CD4-positive, alpha-beta memory T cell (primary cell): ENCODE measurements at regions of chr6 and their contacts with region 1.

Region 1: GRCh38 chr6:111113336-111114086 is 26.2 kb downstream of the SLC16A10 start:
- DNase-seq: peak in 2 of 5 donors; percentile 4 to 50
- H3K4me3 ChIP-seq: no peak overlapping the region
- H3K4me3 Mint-ChIP-seq: peak overlapping the region; percentile 26 to 82 (median 70)
- H3K27ac ChIP-seq: no peak overlapping the region
- H3K27ac Mint-ChIP-seq: peak overlapping the region; percentile 38 to 94 (median 93)
- H3K4me1 ChIP-seq: peaks cover 28% of the 10 kb centered on the region
- H3K4me1 Mint-ChIP-seq: peaks cover 14 to 29% (median 21%) of the 10 kb centered on the region in 4 donors
- H3K27me3 ChIP-seq: no peaks in the 10 kb centered on the region
- H3K27me3 Mint-ChIP-seq: peaks cover 0 to 1% of the 10 kb centered on the region in 2 donors

Region 2: DNA sequence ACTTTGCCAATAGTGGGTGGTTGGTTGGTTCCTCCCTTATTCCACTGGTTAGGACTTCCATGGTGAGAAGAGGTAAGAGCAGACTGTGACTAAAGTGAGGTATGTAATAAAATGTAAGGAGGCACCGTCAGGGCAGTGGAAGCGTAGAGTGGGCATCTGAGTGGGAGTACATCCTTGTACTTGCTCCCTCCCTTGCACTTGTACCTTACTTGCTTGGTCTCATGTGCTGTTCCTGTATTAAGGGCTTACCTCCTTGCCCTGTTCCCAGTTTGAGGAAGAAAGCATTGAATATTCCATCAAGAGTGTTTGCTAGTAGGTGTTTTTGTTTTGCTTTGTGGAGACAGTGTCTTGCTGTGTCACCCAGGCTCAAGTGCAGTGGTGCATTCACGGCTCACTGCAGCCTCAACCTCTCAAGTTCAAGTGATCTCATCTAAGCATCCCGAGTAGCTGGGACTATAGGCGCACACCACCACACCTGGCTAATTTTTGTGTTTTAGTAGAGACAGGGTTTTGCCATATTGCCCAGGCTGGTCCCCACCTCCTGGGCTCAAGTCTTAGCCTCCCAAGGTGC is 213.4 kb before region 1 on chr6:
- CTCF ChIA-PET with region 1: no interaction called
- POLR2A ChIA-PET with region 1: no interaction called
- intact Hi-C with region 1: no loop called
- DNase-seq: no peak
- H3K4me3 ChIP-seq: no peak overlapping the region
- H3K4me3 Mint-ChIP-seq: no peak overlapping the region
- H3K27ac ChIP-seq: no peak overlapping the region
- H3K27ac Mint-ChIP-seq: peak overlapping the region in 3 of 7 donors; percentile 13 to 74 (median 38)
- H3K4me1 ChIP-seq: no peaks in the 10 kb centered on the region
- H3K4me1 Mint-ChIP-seq: peaks cover 0 to 4% (median 4%) of the 10 kb centered on the region in 4 donors
- H3K27me3 ChIP-seq: no peaks in the 10 kb centered on the region
- H3K27me3 Mint-ChIP-seq: no peaks in the 10 kb centered on the region

Region 3: GRCh38 chr6:111087106-111087835 is 26.2 kb before region 1 on chr6 and contains the start of gene SLC16A10:
- CTCF ChIA-PET with region 1: no interaction called
- POLR2A ChIA-PET with region 1: interaction called, 4 read pairs
- intact Hi-C with region 1: loop called (anchors 1 kb)
- DNase-seq: peak; percentile 75 to 82 (median 79)
- H3K4me3 ChIP-seq: peak within 1 kb of the TSS; percentile 62 to 74
- H3K4me3 Mint-ChIP-seq: peak within 1 kb of the TSS; percentile 88 to 99 (median 93)
- H3K27ac ChIP-seq: peak within 1 kb of the TSS; percentile 47
- H3K27ac Mint-ChIP-seq: peak within 1 kb of the TSS; percentile 77 to 92 (median 90)
- H3K4me1 ChIP-seq: peaks cover 22% of the 10 kb centered on the region
- H3K4me1 Mint-ChIP-seq: peaks cover 21 to 37% (median 26%) of the 10 kb centered on the region in 4 donors
- H3K27me3 ChIP-seq: no peaks in the 10 kb centered on the region
- H3K27me3 Mint-ChIP-seq: peaks cover 7 to 15% of the 10 kb centered on the region in 2 donors
- total RNA-seq, gene SLC16A10: 9.8 to 11.2 TPM

Region 4: GRCh38 chr6:111171577-111172400 is 58.3 kb after region 1 on chr6:
- CTCF ChIA-PET with region 1: interaction called, 5 read pairs
- POLR2A ChIA-PET with region 1: interaction called, 3 read pairs
- intact Hi-C with region 1: loop called (anchors 10 kb)
- DNase-seq: no peak
- H3K4me3 ChIP-seq: no peak overlapping the region
- H3K4me3 Mint-ChIP-seq: no peak overlapping the region
- H3K27ac ChIP-seq: no peak overlapping the region
- H3K27ac Mint-ChIP-seq: no peak overlapping the region
- H3K4me1 ChIP-seq: peaks cover 24% of the 10 kb centered on the region
- H3K4me1 Mint-ChIP-seq: peaks cover 14 to 25% (median 16%) of the 10 kb centered on the region in 4 donors
- H3K27me3 ChIP-seq: no peaks in the 10 kb centered on the region
- H3K27me3 Mint-ChIP-seq: no peaks in the 10 kb centered on the region